Naive thymus-derived CD4-positive, alpha-beta T cell (primary cell): ENCODE measurements at regions of chr11 and their contacts with region 1.

Region 1: GRCh38 chr11:86047275-86047991 is 21.5 kb downstream of the PICALM start:
- DNase-seq: no peak
- ATAC-seq: peak; percentile 72
- H3K4me3 ChIP-seq: no peak overlapping the region
- H3K4me3 Mint-ChIP-seq: peak overlapping the region in 8 of 10 donors; percentile 29 to 71 (median 55)
- H3K27ac ChIP-seq: no peak overlapping the region
- H3K27ac Mint-ChIP-seq: peak overlapping the region; percentile 17 to 82 (median 69)
- H3K4me1 ChIP-seq: peaks cover 40 to 68% of the 10 kb centered on the region in 2 donors
- H3K4me1 Mint-ChIP-seq: peaks cover 57 to 100% (median 89%) of the 10 kb centered on the region in 7 donors
- H3K27me3 ChIP-seq: no peaks in the 10 kb centered on the region
- H3K27me3 Mint-ChIP-seq: no peaks in the 10 kb centered on the region

Region 2: DNA sequence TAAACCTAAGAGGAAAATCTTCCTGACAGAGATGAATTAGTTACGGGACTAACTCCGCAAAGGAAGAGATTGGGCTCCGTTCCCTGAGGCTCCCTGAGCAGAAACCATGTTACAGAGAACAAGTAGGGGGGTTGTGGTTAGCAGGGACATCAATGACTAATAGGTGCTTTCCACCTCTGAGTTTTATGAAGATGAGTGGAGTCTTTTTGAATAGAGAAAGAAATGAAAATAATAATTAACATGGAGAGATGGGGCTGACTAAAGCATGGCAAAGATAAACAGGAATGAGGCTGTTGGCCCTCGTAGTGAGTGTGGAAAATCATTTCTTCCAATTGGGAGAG is 68.9 kb after region 1 on chr11:
- CTCF ChIA-PET with region 1: no interaction called
- POLR2A ChIA-PET with region 1: no interaction called
- intact Hi-C with region 1: loop called (anchors 5 kb)
- DNase-seq: no peak
- ATAC-seq: peak; percentile 60
- H3K4me3 ChIP-seq: no peak overlapping the region
- H3K4me3 Mint-ChIP-seq: peak overlapping the region in 1 of 10 donors; percentile 41
- H3K27ac ChIP-seq: no peak overlapping the region
- H3K27ac Mint-ChIP-seq: peak overlapping the region in 3 of 9 donors; percentile 9 to 82 (median 58)
- H3K4me1 ChIP-seq: peaks cover 0 to 15% of the 10 kb centered on the region in 2 donors
- H3K4me1 Mint-ChIP-seq: peaks cover 0 to 21% (median 0%) of the 10 kb centered on the region in 7 donors
- H3K27me3 ChIP-seq: no peaks in the 10 kb centered on the region
- H3K27me3 Mint-ChIP-seq: peaks cover 0 to 6% (median 0%) of the 10 kb centered on the region in 5 donors